ENCODE measurements at regions of chr18 and their contacts with region 1.

Region 1: GRCh38 chr18:48698707-48699106 is 159.9 kb downstream of the CTIF start:
- DNase-seq: peak in 2 of 3 donors; percentile 67 to 69
- H3K4me3 ChIP-seq: no peak overlapping the region
- H3K27ac ChIP-seq: no peak overlapping the region
- H3K4me1 ChIP-seq: peaks cover 0 to 46% (median 13%) of the 10 kb centered on the region in 4 experiments
- H3K27me3 ChIP-seq: no peaks in the 10 kb centered on the region

Region 2: GRCh38 chr18:48711651-48712486 is 13.2 kb after region 1 on chr18:
- CTCF ChIA-PET with region 1: interaction called, 13 read pairs
- POLR2A ChIA-PET with region 1: no interaction called
- DNase-seq: peak; percentile 27 to 54 (median 51)
- H3K4me3 ChIP-seq: no peak overlapping the region
- H3K27ac ChIP-seq: no peak overlapping the region
- H3K4me1 ChIP-seq: peaks cover 0 to 18% (median 6%) of the 10 kb centered on the region in 4 experiments
- H3K27me3 ChIP-seq: no peaks in the 10 kb centered on the region